Astrocyte of the cerebellum (primary cell): ENCODE measurements at regions of chr15 and their contacts with region 1.

Region 1: GRCh38 chr15:48520376-48521155 is 124.9 kb downstream of the FBN1 start:
- DNase-seq: no peak
- H3K4me3 ChIP-seq: no peak overlapping the region
- CTCF ChIP-seq: no peak

Region 2: DNA sequence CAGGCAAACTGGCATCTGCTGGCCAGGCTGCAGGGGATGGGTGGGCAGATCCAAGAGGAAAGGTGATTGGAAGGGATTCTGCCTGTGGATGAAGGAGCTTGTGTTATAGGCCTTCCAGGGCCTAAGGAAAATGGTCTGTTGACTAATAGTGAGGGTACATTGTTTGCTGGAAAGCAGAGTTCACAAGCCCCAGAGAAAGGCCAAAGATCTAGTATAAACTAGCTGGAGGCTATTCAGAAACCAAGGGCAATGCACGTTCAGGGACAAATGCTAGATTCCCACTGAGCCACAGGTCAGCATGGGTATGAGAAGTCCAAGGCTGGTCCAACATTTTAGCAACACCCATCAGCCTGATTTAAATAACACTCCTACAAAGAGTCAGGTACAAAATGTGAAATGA is 50.3 kb after region 1 on chr15:
- in situ Hi-C with region 1: loop called (anchors 5 kb)
- DNase-seq: no peak
- H3K4me3 ChIP-seq: no peak overlapping the region
- CTCF ChIP-seq: no peak

Region 3: DNA sequence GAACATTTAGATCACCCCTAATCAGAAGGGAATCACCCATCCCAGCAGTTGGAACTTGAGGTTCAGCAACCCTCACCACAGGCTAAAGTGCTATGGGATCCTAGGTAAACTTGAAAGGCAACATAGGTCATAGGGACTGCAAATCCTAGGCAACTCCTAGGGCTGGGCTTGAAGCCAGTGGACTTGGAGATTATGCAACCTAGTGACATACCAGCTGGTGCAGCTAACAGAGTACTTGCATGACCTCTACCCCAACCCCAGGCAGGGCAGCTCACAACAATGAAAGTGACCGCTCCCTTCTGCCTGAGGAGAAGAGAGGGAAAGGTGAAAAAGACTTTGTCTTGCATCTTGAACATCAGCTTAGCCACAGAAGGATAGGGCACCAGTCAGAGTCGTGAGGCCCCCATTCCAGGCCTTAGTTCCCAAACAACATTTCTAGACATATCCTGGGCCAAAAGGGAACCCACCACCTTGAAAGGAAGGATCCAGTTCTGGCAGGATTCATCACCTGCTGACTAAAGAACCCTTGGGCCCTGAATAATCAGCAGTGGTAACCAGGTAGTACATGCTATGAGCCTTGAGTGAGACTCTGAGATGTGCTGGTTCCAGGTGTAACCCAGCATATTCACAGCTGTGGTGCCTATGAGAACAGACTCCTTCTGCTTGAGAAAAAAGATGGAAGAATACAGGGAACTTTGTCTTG is 162.5 kb after region 1 on chr15:
- in situ Hi-C with region 1: no loop called
- DNase-seq: no peak
- H3K4me3 ChIP-seq: no peak overlapping the region
- CTCF ChIP-seq: no peak